Posterior vena cava (tissue), 2 donors: ENCODE measurements at regions of chr10 and their contacts with region 1.

Region 1: GRCh38 chr10:84820120-84820519 is 491.7 kb downstream of the CCSER2 start:
- DNase-seq: no peak

Region 2: DNA sequence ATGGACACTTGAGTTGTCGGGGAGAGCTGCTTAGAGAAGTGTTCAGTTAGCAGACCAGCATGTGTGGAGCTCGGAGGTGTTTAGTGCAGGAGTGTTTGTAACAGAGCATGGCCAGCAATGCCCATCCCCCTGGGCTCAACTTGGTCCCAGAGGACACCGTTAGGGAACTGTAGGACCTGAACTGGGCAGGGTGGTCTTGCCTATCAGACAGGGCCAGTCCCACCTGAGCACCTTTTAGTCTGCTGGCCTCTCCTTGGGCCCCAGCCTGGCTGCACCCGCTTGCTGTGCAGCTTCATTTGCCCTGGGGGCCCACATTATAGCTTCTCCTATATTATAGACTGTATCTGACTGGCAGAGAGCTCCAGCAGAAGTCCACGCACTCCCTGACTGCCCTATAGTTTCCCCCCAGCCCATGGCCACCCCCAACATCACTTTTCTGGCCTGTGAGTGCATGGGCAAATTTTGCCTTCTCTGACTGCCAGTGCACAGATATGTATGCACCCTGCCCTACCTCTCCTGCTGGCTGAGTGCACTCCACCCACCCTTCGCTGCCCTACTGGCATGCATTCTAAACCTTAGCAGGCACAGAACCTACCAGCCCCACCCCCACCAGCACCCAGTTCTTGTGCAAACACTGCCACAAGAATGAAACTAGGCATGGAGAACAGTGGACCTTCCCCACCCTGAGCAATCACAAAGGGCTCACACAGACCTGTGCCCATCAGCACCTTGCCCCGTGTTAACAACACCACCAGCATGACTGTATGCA is 1711.4 kb before region 1 on chr10:
- intact Hi-C with region 1: no loop called
- DNase-seq: peak; percentile 61

Region 3: GRCh38 chr10:84205049-84205852 is 614.9 kb before region 1 on chr10:
- intact Hi-C with region 1: no loop called
- DNase-seq: peak; percentile 82

Region 4: GRCh38 chr10:84770824-84771223 is 49.3 kb before region 1 on chr10:
- intact Hi-C with region 1: loop called in 1 of 2 experiments (anchors 2 kb)
- DNase-seq: no peak